ENCODE measurements at regions of chr9 and their contacts with region 1.

Region 1: DNA sequence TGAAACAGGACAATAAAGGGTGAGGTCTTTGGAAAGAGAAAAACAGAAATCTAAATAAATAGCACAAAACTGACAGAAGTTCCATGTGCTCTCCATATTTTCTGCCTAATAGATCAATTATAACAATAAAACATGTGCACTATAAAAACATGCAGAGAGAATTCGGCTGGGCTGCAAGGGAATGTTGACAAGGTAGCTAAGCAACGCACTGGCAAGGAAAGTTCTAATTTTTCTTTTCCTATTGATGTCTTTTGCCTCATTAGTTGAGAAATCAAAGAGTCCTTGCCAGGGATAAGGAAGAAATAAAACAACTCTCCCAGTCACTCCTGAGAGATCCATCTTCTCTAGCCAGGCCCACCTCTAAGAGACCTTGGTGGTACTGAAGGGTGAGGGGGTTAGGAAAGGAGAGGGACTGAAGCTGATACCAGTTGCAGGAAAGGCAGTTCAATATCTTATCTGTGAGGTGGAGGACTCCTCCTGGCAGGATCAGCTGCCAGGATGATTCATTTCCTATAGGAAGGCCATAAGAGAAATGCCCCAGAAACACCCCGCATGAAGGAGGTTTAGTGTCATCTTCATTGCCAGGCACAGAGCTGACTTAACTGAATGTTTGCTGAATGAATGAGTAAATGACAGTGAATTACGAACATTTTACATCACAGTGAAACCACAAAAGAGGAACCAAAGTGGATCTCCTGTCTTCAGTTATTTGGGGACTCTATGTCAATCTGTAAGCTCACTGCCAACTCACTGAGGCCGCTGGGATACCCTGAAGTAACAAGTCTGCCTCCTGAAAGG is 63.7 kb upstream of the IFNK start:
- DNase-seq: peak; percentile 40
- H3K4me3 Mint-ChIP-seq: no peak overlapping the region
- H3K27ac Mint-ChIP-seq: no peak overlapping the region
- H3K4me1 Mint-ChIP-seq: peaks cover 19% of the 10 kb centered on the region
- H3K27me3 Mint-ChIP-seq: no peaks in the 10 kb centered on the region

Region 2: GRCh38 chr9:27413506-27414219 is 46.8 kb before region 1 on chr9:
- CTCF ChIA-PET with region 1: no interaction called
- intact Hi-C with region 1: no loop called
- DNase-seq: no peak
- H3K4me3 Mint-ChIP-seq: no peak overlapping the region
- H3K27ac Mint-ChIP-seq: no peak overlapping the region
- H3K4me1 Mint-ChIP-seq: no peaks in the 10 kb centered on the region
- H3K27me3 Mint-ChIP-seq: peaks cover 2% of the 10 kb centered on the region

Region 3: DNA sequence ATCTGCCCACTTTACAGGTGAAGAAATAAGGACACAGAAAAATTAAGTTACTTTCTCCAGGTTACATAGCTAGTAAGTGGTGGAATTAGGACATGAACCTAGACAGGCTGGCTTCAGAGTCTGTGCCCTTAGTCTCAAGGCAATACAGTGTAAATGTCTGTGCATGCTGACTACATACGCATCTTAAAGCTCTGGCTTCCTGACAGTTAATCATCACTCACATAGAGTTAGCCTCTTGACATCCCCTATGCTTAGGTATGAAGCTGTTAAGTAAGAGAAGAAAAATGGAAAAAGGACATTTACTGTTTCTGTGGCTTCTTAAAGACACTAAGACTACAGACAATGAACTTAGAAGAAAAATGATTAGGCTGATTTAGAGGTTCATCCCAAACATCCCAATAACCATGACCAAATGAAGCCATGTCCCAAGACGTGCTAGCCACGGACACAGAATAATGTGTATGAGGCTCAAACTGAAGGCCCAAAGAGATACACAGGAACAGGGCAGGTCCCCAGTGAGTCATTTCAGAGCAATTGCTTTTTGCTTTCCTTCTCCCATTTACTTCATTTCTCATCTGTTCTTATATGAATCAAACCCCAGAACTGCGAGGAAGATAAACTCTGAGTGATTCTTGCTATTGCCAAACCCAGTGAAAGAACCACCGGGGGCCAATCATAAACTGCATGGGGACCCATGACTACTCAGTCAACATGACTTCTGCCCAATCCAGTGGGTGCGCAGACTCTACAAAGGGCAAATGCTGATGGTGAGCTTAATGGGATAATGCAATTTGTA is 36.3 kb before region 1 on chr9:
- CTCF ChIA-PET with region 1: no interaction called
- intact Hi-C with region 1: loop called (anchors 1 kb)
- DNase-seq: peak; percentile 51
- H3K4me3 Mint-ChIP-seq: no peak overlapping the region
- H3K27ac Mint-ChIP-seq: peak overlapping the region; percentile 11
- H3K4me1 Mint-ChIP-seq: peaks cover 8% of the 10 kb centered on the region
- H3K27me3 Mint-ChIP-seq: no peaks in the 10 kb centered on the region

Region 4: GRCh38 chr9:27489087-27489876 is 28.9 kb after region 1 on chr9:
- CTCF ChIA-PET with region 1: interaction called, 3 read pairs
- intact Hi-C with region 1: loop called (anchors 2 kb)
- DNase-seq: peak; percentile 20
- H3K4me3 Mint-ChIP-seq: no peak overlapping the region
- H3K27ac Mint-ChIP-seq: no peak overlapping the region
- H3K4me1 Mint-ChIP-seq: peaks cover 25% of the 10 kb centered on the region
- H3K27me3 Mint-ChIP-seq: no peaks in the 10 kb centered on the region

Region 5: GRCh38 chr9:27524236-27524635 is 63.8 kb after region 1 on chr9 and contains the start of gene IFNK:
- CTCF ChIA-PET with region 1: no interaction called
- intact Hi-C with region 1: loop called (anchors 1 kb)
- DNase-seq: no peak
- H3K4me3 Mint-ChIP-seq: no peak within 1 kb of the TSS
- H3K27ac Mint-ChIP-seq: peak within 1 kb of the TSS; percentile 57
- H3K4me1 Mint-ChIP-seq: peaks cover 14% of the 10 kb centered on the region
- H3K27me3 Mint-ChIP-seq: peaks cover 8% of the 10 kb centered on the region
- total RNA-seq, gene IFNK: 0.24 TPM in 1 of 2 experiments, not detected in the other

Region 6: GRCh38 chr9:27626244-27627187 is 166.1 kb after region 1 on chr9:
- CTCF ChIA-PET with region 1: no interaction called
- intact Hi-C with region 1: no loop called
- DNase-seq: no peak
- H3K4me3 Mint-ChIP-seq: no peak overlapping the region
- H3K27ac Mint-ChIP-seq: no peak overlapping the region
- H3K4me1 Mint-ChIP-seq: no peaks in the 10 kb centered on the region
- H3K27me3 Mint-ChIP-seq: peaks cover 3% of the 10 kb centered on the region

Measured in activated naive CD4-positive, alpha-beta T cell treated with anti-CD3 and anti-CD28 coated beads for 36 hours (primary cell).